ENCODE measurements at regions of chr2 and their contacts with region 1.

Region 1: DNA sequence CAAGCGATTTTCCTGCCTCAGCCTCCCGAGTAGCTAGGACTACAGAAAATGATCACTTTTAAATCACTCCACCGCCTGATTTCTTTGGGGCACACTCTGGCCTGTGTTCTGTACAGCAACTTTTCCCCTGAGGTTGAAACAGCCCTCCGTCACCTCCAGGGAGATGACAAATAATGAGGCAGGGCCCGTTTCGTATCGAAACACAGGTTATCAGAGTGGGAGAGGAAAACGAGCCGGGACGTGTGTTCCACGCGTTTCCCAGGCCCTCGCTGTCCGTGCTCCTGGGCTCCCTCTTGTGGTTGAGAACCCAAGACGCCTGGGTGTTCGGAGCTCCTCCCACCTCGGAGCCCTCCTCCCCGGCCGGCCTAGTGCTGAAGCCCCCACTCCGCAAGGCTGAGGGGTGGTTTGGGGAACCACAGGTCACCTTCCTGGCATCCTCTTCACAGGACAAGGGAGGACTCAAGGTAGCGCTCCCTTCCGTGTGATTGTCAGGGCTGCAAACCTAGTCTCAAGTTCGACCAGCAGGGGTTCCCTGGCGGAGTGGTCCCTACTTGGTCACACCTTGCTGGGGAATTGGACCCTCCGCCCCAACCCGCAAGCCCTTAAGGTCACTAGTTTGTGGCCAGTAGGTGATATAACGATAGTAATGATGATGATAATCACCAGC is 12.8 kb downstream of the ATP6V1B1 start:
- DNase-seq: peak; percentile 85
- ATAC-seq: peak; percentile 91
- H3K4me3 Mint-ChIP-seq: peak overlapping the region; percentile 62
- H3K27ac Mint-ChIP-seq: no peak overlapping the region
- H3K4me1 Mint-ChIP-seq: peaks cover 16% of the 10 kb centered on the region
- H3K27me3 Mint-ChIP-seq: peaks cover 57% of the 10 kb centered on the region
- CTCF ChIP-seq: peak; percentile 62; the same call in 1 of the 2 replicates

Region 2: GRCh38 chr2:70679259-70679658 is 269.2 kb before region 1 on chr2:
- CTCF ChIA-PET with region 1: no interaction called
- POLR2A ChIA-PET with region 1: no interaction called
- DNase-seq: no peak
- ATAC-seq: no peak
- H3K4me3 Mint-ChIP-seq: no peak overlapping the region
- H3K27ac Mint-ChIP-seq: no peak overlapping the region
- H3K4me1 Mint-ChIP-seq: no peaks in the 10 kb centered on the region
- H3K27me3 Mint-ChIP-seq: no peaks in the 10 kb centered on the region
- CTCF ChIP-seq: no peak

Region 3: GRCh38 chr2:70789304-70790135 is 158.9 kb before region 1 on chr2:
- CTCF ChIA-PET with region 1: interaction called, 21 read pairs
- POLR2A ChIA-PET with region 1: no interaction called
- DNase-seq: peak; percentile 83
- ATAC-seq: peak; percentile 92
- H3K4me3 Mint-ChIP-seq: peak overlapping the region; percentile 72
- H3K27ac Mint-ChIP-seq: no peak overlapping the region; the same call in 1 of the 2 replicates
- H3K4me1 Mint-ChIP-seq: peaks cover 15% of the 10 kb centered on the region
- H3K27me3 Mint-ChIP-seq: peaks cover 90% of the 10 kb centered on the region
- CTCF ChIP-seq: peak; percentile 33

Region 4: GRCh38 chr2:70871398-70872211 is 76.9 kb before region 1 on chr2:
- CTCF ChIA-PET with region 1: interaction called, 88 read pairs
- POLR2A ChIA-PET with region 1: no interaction called
- DNase-seq: peak; percentile 95
- ATAC-seq: peak; percentile 98
- H3K4me3 Mint-ChIP-seq: no peak overlapping the region
- H3K27ac Mint-ChIP-seq: no peak overlapping the region
- H3K4me1 Mint-ChIP-seq: no peaks in the 10 kb centered on the region
- H3K27me3 Mint-ChIP-seq: peaks cover 65% of the 10 kb centered on the region
- CTCF ChIP-seq: peak; percentile 79

Region 5: DNA sequence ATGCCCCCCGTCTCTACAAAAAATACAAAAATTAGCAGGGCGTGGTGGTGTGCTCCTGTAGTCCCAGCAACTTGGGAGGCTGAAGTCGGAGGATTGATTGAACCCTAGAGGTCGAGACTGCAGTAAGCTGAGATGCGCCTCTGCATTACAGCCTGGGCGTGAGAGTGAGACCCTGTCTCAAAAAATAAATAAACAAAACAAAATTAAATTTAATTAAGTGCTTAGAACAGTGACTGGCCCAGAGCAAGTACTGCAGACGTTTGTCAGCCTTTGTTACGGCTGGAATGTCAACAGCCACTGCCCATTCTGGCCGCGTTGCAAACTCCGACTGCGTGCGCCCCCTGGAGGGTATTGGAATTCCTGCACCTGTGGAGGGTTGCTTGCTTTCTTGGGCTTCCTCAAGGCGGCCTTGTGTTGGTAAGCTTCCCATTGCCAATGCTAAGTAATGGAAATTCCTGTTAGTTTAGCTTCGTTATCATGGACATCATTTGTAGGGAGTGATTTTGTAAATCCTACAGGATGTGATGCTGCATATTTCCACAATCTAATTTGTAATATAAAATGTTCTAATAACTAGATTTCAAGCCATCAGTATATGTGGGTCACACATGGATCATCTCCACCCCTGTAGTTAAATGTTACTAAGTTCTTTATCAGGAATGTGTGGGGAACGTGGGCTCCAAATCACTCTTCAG is 28.7 kb before region 1 on chr2:
- CTCF ChIA-PET with region 1: interaction called, 55 read pairs
- POLR2A ChIA-PET with region 1: interaction called, 3 read pairs
- DNase-seq: peak; percentile 94
- ATAC-seq: peak; percentile 88
- H3K4me3 Mint-ChIP-seq: no peak overlapping the region
- H3K27ac Mint-ChIP-seq: no peak overlapping the region
- H3K4me1 Mint-ChIP-seq: peaks cover 13% of the 10 kb centered on the region
- H3K27me3 Mint-ChIP-seq: peaks cover 34% of the 10 kb centered on the region
- CTCF ChIP-seq: peak; percentile 92

Region 6: DNA sequence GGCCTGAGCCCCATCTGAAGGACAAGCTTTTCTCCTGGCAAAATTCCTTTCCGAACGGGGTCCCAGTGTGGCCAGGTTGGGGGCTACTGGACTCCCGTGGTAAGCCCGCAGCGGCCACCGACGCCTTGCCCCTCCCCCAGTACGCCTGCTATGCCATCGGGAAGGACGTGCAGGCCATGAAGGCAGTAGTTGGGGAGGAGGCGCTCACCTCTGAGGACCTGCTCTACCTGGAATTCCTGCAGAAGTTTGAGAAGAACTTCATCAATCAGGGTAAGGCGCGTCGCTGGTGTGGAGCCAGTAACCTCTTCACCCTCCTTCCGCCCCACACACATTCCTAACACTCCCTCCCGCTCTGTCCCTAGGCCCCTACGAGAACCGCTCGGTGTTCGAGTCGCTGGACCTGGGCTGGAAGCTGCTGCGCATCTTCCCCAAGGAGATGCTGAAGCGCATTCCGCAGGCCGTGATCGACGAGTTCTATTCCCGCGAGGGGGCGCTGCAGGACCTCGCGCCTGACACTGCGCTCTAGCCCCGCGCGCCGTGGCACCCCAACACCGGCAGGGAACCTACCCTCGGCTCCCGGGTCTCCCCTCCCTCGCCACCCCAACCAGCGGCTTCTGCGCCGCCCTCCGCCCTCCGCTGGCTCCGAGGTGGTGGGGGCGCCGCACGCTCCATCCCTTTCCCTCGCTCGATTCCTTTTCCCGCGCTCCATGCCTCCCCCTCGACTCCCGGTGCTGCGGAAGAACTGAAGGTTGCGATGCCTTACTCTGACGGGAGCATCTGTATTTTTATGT is 16.3 kb after region 1 on chr2:
- CTCF ChIA-PET with region 1: interaction called, 159 read pairs
- POLR2A ChIA-PET with region 1: no interaction called
- DNase-seq: peak; percentile 87
- ATAC-seq: peak; percentile 79
- H3K4me3 Mint-ChIP-seq: peak overlapping the region; percentile 63
- H3K27ac Mint-ChIP-seq: no peak overlapping the region
- H3K4me1 Mint-ChIP-seq: peaks cover 3% of the 10 kb centered on the region
- H3K27me3 Mint-ChIP-seq: peaks cover 88% of the 10 kb centered on the region
- CTCF ChIP-seq: peak; percentile 72

Region 7: GRCh38 chr2:70984576-70985282 is 36.3 kb after region 1 on chr2:
- CTCF ChIA-PET with region 1: interaction called, 16 read pairs
- POLR2A ChIA-PET with region 1: no interaction called
- DNase-seq: peak; percentile 85
- ATAC-seq: peak; percentile 96
- H3K4me3 Mint-ChIP-seq: peak overlapping the region; percentile 54
- H3K27ac Mint-ChIP-seq: no peak overlapping the region
- H3K4me1 Mint-ChIP-seq: peaks cover 5% of the 10 kb centered on the region
- H3K27me3 Mint-ChIP-seq: peaks cover 14% of the 10 kb centered on the region
- CTCF ChIP-seq: peak; percentile 90

Region 8: DNA sequence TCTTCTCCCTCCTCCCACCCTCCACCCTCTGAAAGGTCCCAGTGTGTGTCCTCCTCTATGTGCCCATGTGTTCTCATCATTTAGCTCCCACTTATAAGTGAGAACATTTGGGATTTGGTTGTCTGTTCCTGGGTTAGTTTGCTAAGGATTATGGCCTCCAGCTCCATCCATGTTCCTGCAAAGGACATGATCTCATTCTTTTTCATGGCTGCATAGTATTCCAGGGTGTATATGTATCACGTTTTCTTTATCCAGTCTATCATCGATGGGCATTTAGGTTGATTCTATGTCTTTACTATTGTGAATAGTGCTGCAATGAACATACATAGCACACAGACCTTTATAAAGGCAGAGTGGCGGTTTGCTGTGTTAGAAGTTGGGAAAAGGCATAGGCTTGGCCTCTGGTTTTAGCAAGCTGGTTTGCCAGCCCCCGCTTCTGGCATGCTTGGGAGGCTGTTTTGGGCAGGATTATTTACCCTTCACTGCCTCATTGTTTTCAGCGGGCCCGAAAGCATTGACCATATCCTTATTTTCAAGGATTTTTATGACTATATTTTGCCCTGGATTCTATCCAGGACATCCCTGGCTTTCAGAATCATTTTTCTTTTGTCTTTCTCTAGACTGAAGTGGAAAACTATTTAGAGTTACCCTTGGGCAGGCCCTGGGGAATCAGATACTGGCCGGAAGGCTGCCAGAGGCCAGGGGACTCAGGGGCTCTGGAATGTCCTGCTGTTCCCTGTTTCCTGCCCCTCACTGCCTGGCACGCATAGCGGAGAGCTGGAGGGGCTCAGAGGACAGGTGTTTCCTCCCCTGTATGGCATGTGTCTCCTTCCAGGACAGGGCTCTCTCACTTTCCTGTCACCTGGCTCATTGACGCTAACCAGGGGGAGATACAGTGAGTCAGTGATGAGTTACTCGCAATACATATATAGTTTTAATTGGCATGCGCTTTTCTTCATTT is 543.4 kb after region 1 on chr2:
- CTCF ChIA-PET with region 1: no interaction called
- POLR2A ChIA-PET with region 1: no interaction called
- DNase-seq: no peak
- ATAC-seq: no peak
- H3K4me3 Mint-ChIP-seq: no peak overlapping the region
- H3K27ac Mint-ChIP-seq: no peak overlapping the region
- H3K4me1 Mint-ChIP-seq: peaks cover 10% of the 10 kb centered on the region
- H3K27me3 Mint-ChIP-seq: no peaks in the 10 kb centered on the region; the same call in 1 of the 2 replicates
- CTCF ChIP-seq: no peak

Measured in WTC11 (cell line).